ENCODE measurements at regions of chr7 and their contacts with region 1.

Region 1: GRCh38 chr7:94228678-94229077 is 166.0 kb upstream of the COL1A2 start:
- DNase-seq: no peak
- H3K4me3 ChIP-seq: no peak overlapping the region
- H3K27ac ChIP-seq: no peak overlapping the region
- H3K4me1 ChIP-seq: peaks cover 1% of the 10 kb centered on the region
- H3K27me3 ChIP-seq: peaks cover 3% of the 10 kb centered on the region
- CTCF ChIP-seq: no peak

Region 2: DNA sequence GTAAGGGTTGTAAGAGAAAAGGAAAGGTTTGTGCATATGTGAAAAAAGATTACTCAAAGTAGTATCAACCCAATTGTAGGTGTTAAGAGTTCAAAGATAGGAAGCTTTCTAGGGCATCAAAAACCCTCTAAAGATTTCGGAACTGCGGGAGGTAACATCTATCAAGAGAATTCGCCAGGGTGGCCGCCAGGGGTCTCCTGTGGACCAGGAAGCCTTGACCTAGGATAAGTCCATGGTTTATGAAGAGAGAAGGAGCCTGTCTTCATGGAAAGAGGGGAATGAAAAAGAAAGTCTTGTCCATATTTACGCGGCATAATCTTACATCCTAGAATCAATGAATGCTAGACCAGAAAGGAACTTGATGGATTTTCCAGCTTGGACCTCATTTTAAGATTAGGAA is 513.4 kb before region 1 on chr7:
- CTCF ChIA-PET with region 1: no interaction called
- dilution Hi-C with region 1: no loop called
- in situ Hi-C with region 1: no loop called
- intact Hi-C with region 1: loop called (anchors 5 kb)
- DNase-seq: peak; percentile 16
- H3K4me3 ChIP-seq: no peak overlapping the region
- H3K27ac ChIP-seq: no peak overlapping the region
- H3K4me1 ChIP-seq: peaks cover 18% of the 10 kb centered on the region
- H3K27me3 ChIP-seq: peaks cover 14% of the 10 kb centered on the region
- CTCF ChIP-seq: peak; percentile 57 to 62